Gastrocnemius medialis (tissue), 4 donors: ENCODE measurements at regions of chr4 and their contacts with region 1.

Region 1: DNA sequence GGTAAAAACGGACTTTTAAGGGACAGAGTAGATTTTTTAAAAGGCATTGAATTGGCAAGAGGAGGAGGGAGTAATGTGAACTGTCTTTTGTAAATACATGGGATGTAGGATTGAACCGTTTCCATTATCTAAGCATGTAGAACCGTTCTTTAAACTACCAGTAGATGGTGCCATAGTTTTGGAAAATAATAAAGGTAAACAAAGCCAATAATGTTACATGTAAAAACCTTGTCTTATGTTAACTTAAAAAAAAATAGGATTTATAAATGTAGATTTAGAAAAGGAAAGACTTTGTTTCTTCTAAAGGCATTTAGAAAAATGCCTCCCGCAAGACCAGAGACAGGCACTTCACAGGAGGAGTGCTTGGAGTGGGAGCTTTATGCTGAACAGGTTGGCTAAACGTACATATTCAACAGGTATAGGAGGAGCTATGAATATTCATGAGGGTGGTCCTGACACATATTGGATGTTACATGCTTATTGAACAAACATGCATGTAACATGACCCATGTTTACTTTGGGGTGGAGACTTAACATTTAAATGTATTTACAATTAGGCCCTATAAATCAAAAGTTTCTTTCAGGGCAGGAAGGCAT is 45.5 kb upstream of the FAM241A start:
- DNase-seq: no peak
- ATAC-seq: peak; percentile 80
- H3K4me3 ChIP-seq: no peak overlapping the region
- H3K27ac ChIP-seq: no peak overlapping the region
- H3K4me1 ChIP-seq: no peaks in the 10 kb centered on the region
- H3K27me3 ChIP-seq: no peaks in the 10 kb centered on the region
- CTCF ChIP-seq: peak; percentile 38 to 69 (median 55)
- POLR2A ChIP-seq: no peak

Region 2: GRCh38 chr4:112145326-112145819 is 45.6 kb after region 1 on chr4 and contains the start of gene FAM241A:
- in situ Hi-C with region 1: no loop called
- intact Hi-C with region 1: loop called (anchors 5 kb)
- DNase-seq: peak; percentile 75 to 81
- ATAC-seq: peak; percentile 88 to 91
- H3K4me3 ChIP-seq: peak within 1 kb of the TSS; percentile 69 to 91 (median 85)
- H3K27ac ChIP-seq: peak within 1 kb of the TSS; percentile 79 to 86 (median 82)
- H3K4me1 ChIP-seq: peaks cover 5 to 24% of the 10 kb centered on the region in 2 donors
- H3K27me3 ChIP-seq: no peaks in the 10 kb centered on the region
- CTCF ChIP-seq: no peak
- POLR2A ChIP-seq: peak; percentile 84 to 92
- total RNA-seq, gene FAM241A: 2.3 to 7.0 (median 3.3) TPM